ENCODE measurements at regions of chr1 and their contacts with region 1.

Region 1: GRCh38 chr1:170145770-170146676 is at the start of gene NTMT2:
- DNase-seq: peak; percentile 80
- total RNA-seq, gene NTMT2: 2.0 TPM

Region 2: GRCh38 chr1:170074250-170075157 is 71.5 kb before region 1 on chr1 and contains the start of gene KIFAP3:
- intact Hi-C with region 1: loop called (anchors 2 kb)
- DNase-seq: peak; percentile 98
- total RNA-seq, gene KIFAP3: 81.0 TPM

Region 3: GRCh38 chr1:170162459-170163246 is 16.6 kb after region 1 on chr1:
- intact Hi-C with region 1: loop called (anchors 2 kb)
- DNase-seq: peak; percentile 78

Region 4: DNA sequence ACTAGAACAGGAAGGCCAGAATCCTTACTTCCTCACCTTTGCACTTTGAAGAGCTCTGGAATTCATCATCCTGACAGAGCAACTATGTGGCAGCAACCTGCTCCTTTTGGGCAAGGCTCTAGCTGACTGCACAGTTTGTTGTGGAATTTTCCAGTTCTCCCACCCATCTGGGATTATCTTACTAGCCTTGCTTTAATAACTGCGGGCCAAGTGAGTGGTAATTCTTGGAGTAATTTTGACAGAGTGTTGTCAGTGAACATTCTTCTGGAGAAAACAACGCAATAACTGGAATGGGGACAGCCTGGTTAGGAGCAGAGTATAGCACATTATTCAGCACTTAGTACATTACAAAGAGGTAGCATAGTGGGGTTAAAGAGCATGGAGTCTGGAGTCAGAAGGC is 75.0 kb after region 1 on chr1:
- intact Hi-C with region 1: loop called (anchors 5 kb)
- DNase-seq: no peak

Region 5: GRCh38 chr1:170351366-170351946 is 205.4 kb after region 1 on chr1:
- intact Hi-C with region 1: loop called (anchors 5 kb)
- DNase-seq: no peak

Region 6: GRCh38 chr1:170537798-170538503 is 391.9 kb after region 1 on chr1:
- intact Hi-C with region 1: loop called (anchors 5 kb)
- DNase-seq: no peak

Measured in cardiac septum (tissue), 1 donor.